ENCODE measurements at regions of chr10 and their contacts with region 1.

Region 1: DNA sequence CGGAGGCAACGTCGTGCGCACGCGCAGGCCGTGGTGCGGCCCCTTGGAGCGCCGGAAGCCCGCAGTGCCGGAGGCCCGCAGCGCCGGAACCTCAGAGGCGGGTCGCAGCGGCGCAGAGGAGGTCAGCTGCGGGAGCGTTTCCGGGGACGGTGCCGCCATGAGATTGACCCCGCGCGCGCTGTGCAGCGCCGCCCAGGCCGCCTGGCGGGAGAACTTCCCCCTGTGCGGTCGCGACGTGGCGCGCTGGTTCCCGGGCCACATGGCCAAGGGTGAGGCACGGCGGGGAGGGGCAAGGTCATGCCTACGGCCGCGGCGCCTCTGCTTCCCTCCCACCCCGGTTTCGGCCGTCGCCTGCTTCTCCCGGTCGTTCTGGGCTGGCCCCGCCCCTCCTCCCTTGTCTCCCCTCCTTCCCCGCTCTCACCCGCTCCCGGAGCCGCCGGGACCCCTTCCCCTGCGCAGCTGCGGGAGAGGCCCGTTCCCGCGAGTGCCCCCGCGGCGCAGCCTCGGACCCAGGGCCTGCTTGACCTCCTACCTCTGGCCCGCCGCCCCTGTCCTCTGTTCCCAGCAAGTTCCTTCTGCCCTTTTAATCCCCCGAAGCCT is at the start of gene MTG1:
- DNase-seq: peak; percentile 94 to 97
- ATAC-seq: peak; percentile 73 to 88 (median 84)
- H3K4me3 ChIP-seq: peak within 1 kb of the TSS; percentile 54
- H3K4me3 Mint-ChIP-seq: peak within 1 kb of the TSS; percentile 94
- H3K27ac ChIP-seq: peak within 1 kb of the TSS; percentile 49
- H3K27ac Mint-ChIP-seq: peak within 1 kb of the TSS; percentile 87 to 90
- H3K4me1 ChIP-seq: peaks cover 57% of the 10 kb centered on the region
- H3K4me1 Mint-ChIP-seq: peaks cover 45 to 48% of the 10 kb centered on the region in 2 donors
- H3K27me3 ChIP-seq: no peaks in the 10 kb centered on the region
- H3K27me3 Mint-ChIP-seq: no peaks in the 10 kb centered on the region
- CTCF ChIP-seq: no peak
- total RNA-seq, gene MTG1: 64.3 to 76.3 (median 67.1) TPM

Region 2: DNA sequence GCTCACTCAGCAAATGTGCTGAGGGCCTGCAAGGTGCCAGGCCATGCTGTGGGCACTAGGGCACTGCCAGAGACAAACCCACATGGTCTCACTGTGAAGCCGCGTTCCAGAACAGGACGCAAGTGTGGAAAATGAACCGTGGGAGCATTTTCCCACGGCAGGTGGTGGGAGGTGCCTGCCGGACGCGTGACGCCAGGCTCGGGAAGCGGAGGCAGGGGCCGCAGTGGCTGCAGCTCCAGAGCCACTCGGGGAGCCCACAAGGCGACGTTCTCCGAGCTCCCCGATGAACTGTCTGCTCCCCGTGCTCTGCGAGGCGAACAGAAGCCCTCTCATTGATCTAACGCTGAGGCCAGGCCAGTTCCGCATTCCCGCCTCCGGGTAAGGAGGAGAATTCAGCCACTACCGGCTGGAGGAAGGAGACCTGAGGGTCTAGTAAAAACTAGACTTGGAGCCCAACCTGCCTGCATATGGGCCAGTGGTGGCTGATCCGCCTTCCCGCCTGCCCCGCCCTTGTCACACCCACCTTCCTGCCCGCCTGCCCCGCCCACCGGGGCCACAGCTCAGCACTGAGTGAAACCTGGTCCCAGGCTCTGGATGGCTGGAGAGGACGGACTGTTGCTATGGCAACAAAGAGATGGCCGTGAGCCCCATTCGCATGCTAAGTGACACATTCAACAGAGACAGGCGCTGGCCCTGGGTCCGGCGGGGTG is 293.3 kb before region 1 on chr10:
- intact Hi-C with region 1: no loop called
- DNase-seq: peak in 1 of 2 donors; percentile 9
- ATAC-seq: peak in 1 of 3 donors; percentile 58
- H3K4me3 ChIP-seq: no peak overlapping the region
- H3K4me3 Mint-ChIP-seq: no peak overlapping the region
- H3K27ac ChIP-seq: no peak overlapping the region
- H3K27ac Mint-ChIP-seq: no peak overlapping the region
- H3K4me1 ChIP-seq: peaks cover 10% of the 10 kb centered on the region
- H3K4me1 Mint-ChIP-seq: peaks cover 0 to 6% of the 10 kb centered on the region in 2 donors
- H3K27me3 ChIP-seq: peaks cover 7% of the 10 kb centered on the region
- H3K27me3 Mint-ChIP-seq: peaks cover 5 to 9% of the 10 kb centered on the region in 2 donors
- CTCF ChIP-seq: no peak

Region 3: GRCh38 chr10:133357285-133358151 is 36.6 kb before region 1 on chr10 and contains the start of gene FUOM:
- intact Hi-C with region 1: loop called (anchors 1 kb)
- DNase-seq: peak; percentile 61 to 83
- ATAC-seq: peak; percentile 91 to 95 (median 92)
- H3K4me3 ChIP-seq: peak within 1 kb of the TSS; percentile 52
- H3K4me3 Mint-ChIP-seq: peak within 1 kb of the TSS; percentile 76
- H3K27ac ChIP-seq: no peak within 1 kb of the TSS
- H3K27ac Mint-ChIP-seq: no peak within 1 kb of the TSS
- H3K4me1 ChIP-seq: peaks cover 10% of the 10 kb centered on the region
- H3K4me1 Mint-ChIP-seq: no peaks in the 10 kb centered on the region
- H3K27me3 ChIP-seq: no peaks in the 10 kb centered on the region
- H3K27me3 Mint-ChIP-seq: no peaks in the 10 kb centered on the region
- CTCF ChIP-seq: no peak
- total RNA-seq, gene FUOM: 7.6 to 9.5 (median 7.9) TPM

Region 4: GRCh38 chr10:133373104-133373624 is 21.0 kb before region 1 on chr10 and contains the start of gene ECHS1:
- intact Hi-C with region 1: loop called (anchors 2 kb)
- DNase-seq: peak; percentile 94 to 95
- ATAC-seq: peak; percentile 99
- H3K4me3 ChIP-seq: peak within 1 kb of the TSS; percentile 61
- H3K4me3 Mint-ChIP-seq: peak within 1 kb of the TSS; percentile 88
- H3K27ac ChIP-seq: peak within 1 kb of the TSS; percentile 48
- H3K27ac Mint-ChIP-seq: peak within 1 kb of the TSS in 1 of 2 donors; percentile 86
- H3K4me1 ChIP-seq: peaks cover 27% of the 10 kb centered on the region
- H3K4me1 Mint-ChIP-seq: peaks cover 0 to 14% of the 10 kb centered on the region in 2 donors
- H3K27me3 ChIP-seq: no peaks in the 10 kb centered on the region
- H3K27me3 Mint-ChIP-seq: no peaks in the 10 kb centered on the region
- CTCF ChIP-seq: no peak
- total RNA-seq, gene ECHS1: 17.7 to 21.3 (median 19.9) TPM

Region 5: DNA sequence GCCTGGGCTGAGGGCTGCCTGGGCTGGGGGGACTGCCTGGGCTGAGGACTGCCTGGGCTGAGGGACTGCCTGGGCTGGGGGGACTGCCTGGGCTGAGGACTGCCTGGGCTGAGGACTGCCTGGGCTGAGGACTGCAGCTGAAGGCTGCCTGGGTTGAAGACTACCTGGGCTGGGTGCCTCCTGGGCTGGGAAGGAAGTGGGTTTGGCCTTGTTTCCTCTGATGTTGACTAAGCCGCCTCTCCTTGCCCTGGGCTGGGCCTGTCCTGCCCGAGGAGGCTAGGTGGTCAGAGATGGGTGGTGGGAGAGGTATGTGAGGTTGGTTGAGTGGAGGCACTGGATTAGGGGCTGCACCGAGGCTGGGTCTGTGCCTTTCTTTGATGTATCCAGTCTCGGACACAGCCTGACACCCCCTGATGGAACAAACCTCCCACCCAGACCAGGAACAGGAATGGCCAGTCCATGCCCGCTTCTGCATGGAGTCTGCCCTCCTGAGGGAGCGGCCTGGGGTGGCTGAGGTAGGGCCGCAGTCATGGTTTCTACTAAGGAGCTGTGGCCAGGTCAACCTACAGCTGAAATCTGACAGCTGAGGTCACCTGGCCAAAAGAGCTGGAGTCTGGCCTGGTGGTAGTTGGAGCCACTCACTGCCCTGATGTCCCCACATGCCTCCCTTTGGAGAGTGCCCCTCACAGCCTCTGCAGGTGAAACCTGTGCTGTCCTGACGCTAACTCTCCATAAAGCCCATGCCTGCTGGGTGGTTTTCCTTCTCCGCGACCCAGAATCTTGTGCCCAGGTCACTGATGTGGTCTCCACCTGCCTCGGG is 81.9 kb after region 1 on chr10:
- intact Hi-C with region 1: no loop called
- DNase-seq: peak in 1 of 2 donors; percentile 31
- ATAC-seq: peak in 2 of 3 donors; percentile 71 to 84
- H3K4me3 ChIP-seq: no peak overlapping the region
- H3K4me3 Mint-ChIP-seq: peak overlapping the region; percentile 31
- H3K27ac ChIP-seq: peak overlapping the region; percentile 34
- H3K27ac Mint-ChIP-seq: peak overlapping the region; percentile 72 to 80
- H3K4me1 ChIP-seq: peaks cover 38% of the 10 kb centered on the region
- H3K4me1 Mint-ChIP-seq: peaks cover 19 to 38% of the 10 kb centered on the region in 2 donors
- H3K27me3 ChIP-seq: no peaks in the 10 kb centered on the region
- H3K27me3 Mint-ChIP-seq: no peaks in the 10 kb centered on the region
- CTCF ChIP-seq: no peak

Measured in natural killer cell (primary cell).